H1 (cell line): ENCODE measurements at regions of chr22 and their contacts with region 1.

Region 1: GRCh38 chr22:40024201-40025061 is 29.7 kb downstream of the FAM83F start:
- DNase-seq: peak in 1 of 2 experiments; percentile 90
- H3K4me3 ChIP-seq: no peak overlapping the region
- H3K27ac ChIP-seq: peak overlapping the region; percentile 17; the same call in 1 of the 2 replicates
- H3K4me1 ChIP-seq: peaks cover 0 to 3% (median 0%) of the 10 kb centered on the region in 4 experiments; a peak in 3 of 7 replicates
- H3K27me3 ChIP-seq: no peaks in the 10 kb centered on the region
- CTCF ChIP-seq: peak; percentile 89 to 95 (median 90)
- EP300 ChIP-seq: no peak
- POLR2A ChIP-seq: no peak
- RAD21 ChIP-seq: peak; percentile 97 to 98

Region 2: DNA sequence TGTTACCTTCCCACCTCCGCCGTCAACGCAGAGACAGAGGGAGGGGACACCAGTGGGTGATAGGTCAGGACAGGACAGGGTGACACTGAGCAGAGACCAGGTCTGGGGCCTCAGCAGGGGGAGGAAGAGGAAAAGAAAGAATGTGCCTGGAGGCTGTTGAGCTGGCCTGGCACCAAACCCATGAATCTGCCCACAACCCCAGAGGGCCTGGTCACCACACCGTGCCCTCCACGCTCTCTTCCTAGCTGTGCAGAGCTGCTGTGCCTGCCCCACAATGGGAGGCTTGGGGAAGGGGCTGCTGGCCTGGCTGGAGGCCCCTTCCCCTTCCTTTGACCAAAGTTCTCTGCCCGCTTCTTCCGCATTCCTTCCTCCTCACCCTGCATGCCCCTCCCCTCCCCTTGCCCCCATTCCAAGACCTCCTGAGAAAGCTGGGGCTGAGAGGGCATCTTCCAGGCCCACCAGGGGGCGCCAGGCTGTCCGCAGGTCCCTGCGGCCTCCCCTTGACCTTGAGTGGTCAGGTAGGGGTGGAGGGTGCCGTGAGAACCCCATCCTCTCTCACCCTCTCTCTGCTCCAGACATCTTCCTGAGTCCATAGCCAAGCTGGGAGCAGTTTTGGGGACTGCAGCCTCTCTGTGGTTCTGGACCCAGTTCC is 464.9 kb before region 1 on chr22:
- CTCF ChIA-PET with region 1: interaction called, 11 read pairs
- POLR2A ChIA-PET with region 1: no interaction called
- DNase-seq: peak; percentile 41 to 86
- H3K4me3 ChIP-seq: peak overlapping the region in 1 of 4 experiments; percentile 19; a peak in 2 of 8 replicates
- H3K27ac ChIP-seq: no peak overlapping the region
- H3K4me1 ChIP-seq: peaks cover 4 to 21% (median 6%) of the 10 kb centered on the region in 4 experiments; a peak in 6 of 7 replicates
- H3K27me3 ChIP-seq: peaks cover 30 to 53% (median 48%) of the 10 kb centered on the region in 4 experiments
- CTCF ChIP-seq: peak; percentile 81 to 87 (median 83)
- EP300 ChIP-seq: no peak
- POLR2A ChIP-seq: no peak
- RAD21 ChIP-seq: peak; percentile 58 to 74

Region 3: DNA sequence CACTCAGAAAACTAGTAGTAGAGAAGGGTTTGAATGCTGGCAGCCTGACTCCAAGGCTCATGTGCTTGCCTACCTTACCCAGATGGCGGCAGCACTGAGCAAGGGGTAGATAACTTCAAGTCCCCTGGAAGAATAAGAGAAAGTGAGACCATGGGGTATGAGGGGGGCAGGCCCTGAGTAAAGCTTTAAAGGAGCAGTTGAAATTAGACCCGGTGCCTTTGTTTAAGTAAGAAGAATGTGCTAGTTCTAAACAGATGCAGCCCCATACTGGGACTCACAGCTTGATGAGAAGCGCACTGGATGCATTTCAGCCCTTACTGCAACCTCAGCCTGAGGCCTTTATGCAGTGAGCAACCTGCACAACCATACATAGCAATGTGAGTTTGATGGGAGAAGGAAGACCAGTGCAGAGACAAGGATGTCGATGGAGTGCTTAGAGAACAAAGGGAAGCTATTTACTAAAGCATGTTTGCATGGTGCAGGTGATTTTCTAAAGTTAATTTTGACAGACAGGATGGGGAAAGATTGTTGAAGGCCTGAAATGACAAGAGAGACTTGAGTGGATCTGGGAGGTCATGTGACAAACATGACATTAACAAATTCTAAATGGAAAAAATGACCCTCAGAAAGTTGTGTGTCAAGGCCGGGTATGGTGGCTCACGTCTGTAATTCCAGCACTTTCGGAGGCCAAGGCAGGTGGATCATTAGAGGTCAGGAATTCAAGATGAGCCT is 91.3 kb before region 1 on chr22:
- CTCF ChIA-PET with region 1: interaction called, 119 read pairs
- POLR2A ChIA-PET with region 1: interaction called, 10 read pairs
- DNase-seq: peak; percentile 78 to 86
- H3K4me3 ChIP-seq: no peak overlapping the region
- H3K27ac ChIP-seq: no peak overlapping the region
- H3K4me1 ChIP-seq: peaks cover 0 to 11% (median 4%) of the 10 kb centered on the region in 4 experiments; a peak in 5 of 7 replicates
- H3K27me3 ChIP-seq: no peaks in the 10 kb centered on the region
- CTCF ChIP-seq: peak; percentile 82 to 95 (median 90)
- EP300 ChIP-seq: peak in 1 of 2 experiments; percentile 74; a peak in 1 of 3 replicates
- POLR2A ChIP-seq: no peak
- RAD21 ChIP-seq: peak; percentile 77 to 84

Region 4: DNA sequence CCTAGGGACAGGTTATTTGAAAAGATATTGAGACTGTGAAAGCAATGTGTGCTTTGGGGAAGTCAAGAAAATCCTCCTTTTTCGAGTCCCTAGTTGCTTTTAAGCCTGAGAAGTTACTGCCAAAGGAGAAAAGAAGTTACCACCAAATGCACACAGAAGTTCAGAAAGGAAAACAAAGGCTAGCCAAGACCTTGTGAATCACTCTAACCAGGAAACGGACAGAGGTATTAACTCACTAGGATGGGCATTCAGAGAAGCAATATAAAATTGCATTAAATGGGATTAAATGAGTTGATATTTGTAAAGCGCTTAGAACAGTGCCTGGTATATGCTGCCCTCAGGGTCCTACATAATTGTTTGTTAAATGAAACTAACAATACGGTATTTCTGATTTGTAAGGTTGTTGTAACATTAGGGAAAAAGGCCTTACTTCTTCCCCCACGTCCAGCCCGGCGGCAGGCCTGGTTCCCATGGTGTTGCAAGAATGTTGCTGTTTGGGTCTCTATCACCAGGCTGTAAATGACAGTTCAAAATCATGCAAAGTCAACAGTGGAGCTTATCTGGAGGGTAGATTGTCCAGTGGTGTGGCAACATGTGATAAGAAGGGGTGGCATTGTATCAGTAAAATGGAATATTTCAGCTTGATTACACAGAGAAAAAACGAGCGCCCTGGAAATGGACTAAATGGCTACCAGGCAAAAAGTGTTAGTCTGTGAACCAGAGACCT is 57.2 kb before region 1 on chr22:
- CTCF ChIA-PET with region 1: interaction called, 15 read pairs
- POLR2A ChIA-PET with region 1: no interaction called
- DNase-seq: no peak
- H3K4me3 ChIP-seq: no peak overlapping the region
- H3K27ac ChIP-seq: no peak overlapping the region
- H3K4me1 ChIP-seq: no peaks in the 10 kb centered on the region; a peak in 1 of 7 replicates
- H3K27me3 ChIP-seq: no peaks in the 10 kb centered on the region; a peak in 2 of 7 replicates
- CTCF ChIP-seq: no peak
- EP300 ChIP-seq: no peak
- POLR2A ChIP-seq: no peak
- RAD21 ChIP-seq: no peak

Region 5: GRCh38 chr22:39997939-39998338 is 26.5 kb before region 1 on chr22:
- CTCF ChIA-PET with region 1: interaction called, 159 read pairs
- POLR2A ChIA-PET with region 1: interaction called, 4 read pairs
- DNase-seq: peak in 1 of 2 experiments; percentile 59
- H3K4me3 ChIP-seq: peak overlapping the region in 3 of 4 experiments; percentile 7 to 30 (median 17); a peak in 4 of 8 replicates
- H3K27ac ChIP-seq: peak overlapping the region; percentile 2; the same call in 1 of the 2 replicates
- H3K4me1 ChIP-seq: peaks cover 26 to 59% (median 46%) of the 10 kb centered on the region in 4 experiments
- H3K27me3 ChIP-seq: peaks cover 0 to 19% (median 13%) of the 10 kb centered on the region in 4 experiments; a peak in 6 of 7 replicates
- CTCF ChIP-seq: no peak
- EP300 ChIP-seq: no peak
- POLR2A ChIP-seq: no peak
- RAD21 ChIP-seq: no peak

Region 6: DNA sequence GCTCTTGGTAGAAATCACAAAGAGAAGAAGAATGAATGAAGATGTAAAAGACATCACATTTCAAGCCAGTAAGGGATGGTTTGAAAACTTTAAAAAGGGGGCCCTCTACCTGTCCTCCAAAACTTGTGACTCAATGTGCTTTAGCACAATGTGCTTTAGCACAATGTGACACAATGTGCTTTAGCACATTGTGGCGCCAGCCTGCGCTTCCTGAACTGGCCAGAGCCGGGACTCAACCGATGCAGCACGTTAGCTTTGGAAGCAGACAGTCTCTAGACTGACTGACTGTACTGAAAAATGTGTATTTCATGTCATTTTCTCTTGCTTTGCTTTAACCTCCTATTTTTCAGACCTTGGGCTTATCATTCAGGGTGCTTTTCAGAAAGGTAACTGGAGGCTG is 33.8 kb after region 1 on chr22:
- CTCF ChIA-PET with region 1: no interaction called
- POLR2A ChIA-PET with region 1: no interaction called
- DNase-seq: no peak
- H3K4me3 ChIP-seq: no peak overlapping the region
- H3K27ac ChIP-seq: no peak overlapping the region
- H3K4me1 ChIP-seq: peaks cover 5 to 24% (median 10%) of the 10 kb centered on the region in 4 experiments
- H3K27me3 ChIP-seq: no peaks in the 10 kb centered on the region
- CTCF ChIP-seq: no peak
- EP300 ChIP-seq: no peak
- POLR2A ChIP-seq: no peak
- RAD21 ChIP-seq: no peak